ENCODE measurements at regions of chr16 and their contacts with region 1.

Region 1: GRCh38 chr16:31179747-31180459 is at the start of gene FUS:
- DNase-seq: peak; percentile 94

Region 2: GRCh38 chr16:31142109-31143010 is 37.5 kb before region 1 on chr16:
- CTCF ChIA-PET with region 1: interaction called, 6 read pairs
- POLR2A ChIA-PET with region 1: interaction called, 44 read pairs
- DNase-seq: peak; percentile 100

Region 3: GRCh38 chr16:31157136-31157535 is 22.8 kb before region 1 on chr16:
- CTCF ChIA-PET with region 1: no interaction called
- POLR2A ChIA-PET with region 1: interaction called, 20 read pairs
- DNase-seq: no peak

Region 4: GRCh38 chr16:31168848-31169247 is 11.1 kb before region 1 on chr16:
- CTCF ChIA-PET with region 1: no interaction called
- POLR2A ChIA-PET with region 1: interaction called, 11 read pairs
- DNase-seq: no peak

Region 5: GRCh38 chr16:31191697-31192428 is 12.0 kb after region 1 on chr16:
- CTCF ChIA-PET with region 1: no interaction called
- POLR2A ChIA-PET with region 1: interaction called, 14 read pairs
- DNase-seq: no peak